ENCODE measurements at regions of chr14 and their contacts with region 1.

Region 1: GRCh38 chr14:55071870-55072640 is 20.6 kb downstream of the MAPK1IP1L start:
- DNase-seq: peak; percentile 42
- ATAC-seq: peak; percentile 85
- H3K4me3 Mint-ChIP-seq: peak overlapping the region; percentile 20
- H3K27ac Mint-ChIP-seq: peak overlapping the region; percentile 73
- H3K4me1 Mint-ChIP-seq: peaks cover 27% of the 10 kb centered on the region
- H3K27me3 Mint-ChIP-seq: no peaks in the 10 kb centered on the region
- CTCF ChIP-seq: no peak

Region 2: GRCh38 chr14:55026793-55027561 is 45.1 kb before region 1 on chr14 and contains the starts of genes SOCS4 and WDHD1:
- CTCF ChIA-PET with region 1: no interaction called
- POLR2A ChIA-PET with region 1: interaction called, 11 read pairs
- intact Hi-C with region 1: no loop called
- DNase-seq: peak; percentile 97
- ATAC-seq: peak; percentile 95
- H3K4me3 Mint-ChIP-seq: peak within 1 kb of the TSS; percentile 98
- H3K27ac Mint-ChIP-seq: peak within 1 kb of the TSS; percentile 97
- H3K4me1 Mint-ChIP-seq: peaks cover 43% of the 10 kb centered on the region
- H3K27me3 Mint-ChIP-seq: no peaks in the 10 kb centered on the region
- CTCF ChIP-seq: no peak
- total RNA-seq, gene SOCS4: 19.8 to 20.8 TPM
- total RNA-seq, gene WDHD1: 59.8 to 68.4 TPM

Region 3: DNA sequence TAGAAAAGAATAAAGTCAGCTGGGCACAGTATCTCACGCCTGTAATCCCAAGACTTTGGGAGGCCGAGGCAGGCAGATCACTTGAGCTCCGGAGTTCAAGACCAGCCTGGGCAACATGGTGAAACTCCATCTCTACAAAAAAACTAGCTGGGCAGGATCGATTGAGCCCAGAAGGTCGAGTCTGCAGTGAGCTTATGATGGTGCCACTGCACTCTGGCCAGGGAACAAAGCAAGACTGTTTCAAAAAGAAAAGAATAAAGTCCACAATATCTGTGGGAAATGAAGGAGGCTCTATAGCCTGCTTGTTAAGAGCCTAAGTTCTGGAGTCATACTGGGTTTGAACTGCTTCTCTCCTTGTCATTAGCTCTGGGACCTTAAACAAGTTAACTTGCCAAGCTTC is 12.7 kb before region 1 on chr14:
- CTCF ChIA-PET with region 1: interaction called, 4 read pairs
- POLR2A ChIA-PET with region 1: interaction called, 17 read pairs
- intact Hi-C with region 1: no loop called
- DNase-seq: no peak
- ATAC-seq: no peak
- H3K4me3 Mint-ChIP-seq: no peak overlapping the region
- H3K27ac Mint-ChIP-seq: no peak overlapping the region
- H3K4me1 Mint-ChIP-seq: peaks cover 37% of the 10 kb centered on the region
- H3K27me3 Mint-ChIP-seq: no peaks in the 10 kb centered on the region
- CTCF ChIP-seq: no peak